ENCODE measurements at regions of chr15 and their contacts with region 1.

Region 1: DNA sequence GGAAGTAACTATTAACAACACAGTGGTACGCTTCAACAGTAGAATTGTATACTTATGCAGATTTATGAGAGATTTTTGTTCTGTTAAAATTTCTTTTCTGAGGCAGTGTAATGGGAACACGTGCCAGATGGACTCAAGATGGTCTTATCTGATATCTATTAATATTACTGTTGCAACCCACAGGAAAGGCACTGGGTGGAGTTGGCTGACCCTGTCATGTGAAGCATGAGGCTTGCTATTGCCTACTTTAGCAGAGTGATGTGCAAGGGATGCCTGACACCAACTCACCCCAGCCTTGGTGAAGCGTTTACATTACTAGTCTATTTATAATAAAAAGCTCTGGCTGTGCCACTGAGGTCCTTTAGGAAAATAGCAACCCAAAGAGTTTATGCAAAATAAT is 19.8 kb upstream of the ARNT2 start:
- DNase-seq: no peak
- H3K4me3 ChIP-seq: no peak overlapping the region
- H3K27ac ChIP-seq: no peak overlapping the region
- H3K4me1 ChIP-seq: no peaks in the 10 kb centered on the region
- H3K27me3 ChIP-seq: peaks cover 47% of the 10 kb centered on the region
- CTCF ChIP-seq: no peak

Region 2: GRCh38 chr15:80202641-80203360 is 181.6 kb before region 1 on chr15:
- CTCF ChIA-PET with region 1: interaction called, 11 read pairs
- POLR2A ChIA-PET with region 1: no interaction called
- intact Hi-C with region 1: no loop called
- DNase-seq: peak; percentile 22 to 39
- H3K4me3 ChIP-seq: no peak overlapping the region
- H3K27ac ChIP-seq: no peak overlapping the region
- H3K4me1 ChIP-seq: peaks cover 7% of the 10 kb centered on the region
- H3K27me3 ChIP-seq: no peaks in the 10 kb centered on the region
- CTCF ChIP-seq: no peak

Region 3: DNA sequence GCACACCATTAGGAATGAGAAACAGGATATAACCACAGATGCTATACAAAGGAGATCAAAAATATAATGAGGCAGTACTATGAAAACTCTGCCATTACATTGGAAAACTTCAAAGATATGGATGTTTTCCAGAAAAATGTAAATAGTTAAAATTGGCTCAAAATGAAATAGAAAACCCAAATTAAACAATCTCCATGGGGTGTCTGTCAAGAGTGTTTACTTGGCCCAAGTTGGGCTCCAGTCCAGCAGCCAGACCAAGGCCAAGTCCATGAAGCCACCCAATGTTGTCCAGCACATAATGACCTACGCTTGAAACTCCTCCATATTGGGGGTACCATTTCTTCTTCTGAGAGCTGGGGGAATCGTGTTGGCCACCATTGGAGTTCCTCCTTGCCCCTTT is 169.5 kb before region 1 on chr15:
- CTCF ChIA-PET with region 1: no interaction called
- POLR2A ChIA-PET with region 1: no interaction called
- intact Hi-C with region 1: no loop called
- DNase-seq: no peak
- H3K4me3 ChIP-seq: no peak overlapping the region
- H3K27ac ChIP-seq: no peak overlapping the region
- H3K4me1 ChIP-seq: 0 out of 2 replicates have a peak, but pooled peaks cover 4% of the 10 kb centered on the region
- H3K27me3 ChIP-seq: no peaks in the 10 kb centered on the region
- CTCF ChIP-seq: no peak